Heart right ventricle (tissue), 16 donors: ENCODE measurements at regions of chr6 and their contacts with region 1.

Region 1: GRCh38 chr6:79949233-79949632 is 1.9 kb upstream of the ELOVL4 start:
- DNase-seq: peak in 1 of 2 donors; percentile 9
- ATAC-seq: no peak
- H3K4me3 ChIP-seq: no peak overlapping the region
- H3K27ac ChIP-seq: no peak overlapping the region
- H3K4me1 ChIP-seq: peaks cover 0 to 22% (median 13%) of the 10 kb centered on the region in 9 donors
- H3K27me3 ChIP-seq: peaks cover 0 to 60% (median 38%) of the 10 kb centered on the region in 7 donors
- CTCF ChIP-seq: peak in 7 of 9 donors; percentile 23 to 62 (median 38)

Region 2: DNA sequence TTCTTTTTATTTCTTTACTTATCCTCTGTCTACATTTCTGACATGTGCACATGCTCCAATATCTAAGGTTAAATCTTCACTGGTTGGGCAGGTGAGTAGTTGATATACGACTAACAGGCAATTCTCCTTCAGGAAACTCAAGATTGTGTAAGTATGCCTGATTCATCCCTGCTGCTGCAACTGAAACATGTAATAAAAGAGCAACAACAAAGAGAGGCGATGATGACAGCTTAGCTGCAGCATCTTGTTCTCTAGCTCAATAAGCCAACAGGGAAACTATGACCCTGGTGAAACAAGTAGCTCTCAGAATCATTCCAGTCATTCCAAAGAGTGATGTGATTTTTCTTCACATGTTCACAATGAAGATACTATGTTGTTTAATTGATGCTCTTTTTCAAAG is 76.3 kb before region 1 on chr6:
- intact Hi-C with region 1: no loop called
- DNase-seq: no peak
- ATAC-seq: no peak
- H3K4me3 ChIP-seq: no peak overlapping the region
- H3K27ac ChIP-seq: no peak overlapping the region
- H3K4me1 ChIP-seq: peaks cover 0 to 15% (median 0%) of the 10 kb centered on the region in 9 donors
- H3K27me3 ChIP-seq: no peaks in the 10 kb centered on the region
- CTCF ChIP-seq: no peak

Region 3: DNA sequence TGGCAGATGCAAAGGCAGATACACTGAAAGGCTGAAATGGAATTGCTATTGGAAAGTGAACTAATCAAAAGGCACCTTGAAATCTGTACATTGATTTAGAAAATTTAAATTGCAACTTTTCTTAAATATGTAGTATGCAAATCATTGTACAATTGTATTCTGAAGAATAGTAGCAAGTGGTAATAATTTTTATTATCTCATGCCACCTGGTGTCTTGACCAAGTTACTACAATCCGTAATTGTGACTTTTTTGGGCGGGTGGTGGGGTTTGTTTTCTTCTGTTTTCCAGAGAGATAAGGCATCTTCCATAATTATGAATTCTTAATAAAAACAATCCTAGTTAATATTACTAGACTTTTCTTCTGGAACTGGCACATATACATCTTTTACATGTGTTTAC is 144.8 kb after region 1 on chr6:
- intact Hi-C with region 1: loop called in 6 of 10 experiments (anchors 2 to 10 kb)
- DNase-seq: no peak
- ATAC-seq: no peak
- H3K4me3 ChIP-seq: no peak overlapping the region
- H3K27ac ChIP-seq: no peak overlapping the region
- H3K4me1 ChIP-seq: no peaks in the 10 kb centered on the region
- H3K27me3 ChIP-seq: peaks cover 0 to 2% (median 0%) of the 10 kb centered on the region in 7 donors
- CTCF ChIP-seq: peak in 8 of 9 donors; percentile 15 to 65 (median 58)

Region 4: GRCh38 chr6:80449726-80450125 is 500.5 kb after region 1 on chr6:
- intact Hi-C with region 1: no loop called
- DNase-seq: no peak
- ATAC-seq: no peak
- H3K4me3 ChIP-seq: no peak overlapping the region
- H3K27ac ChIP-seq: no peak overlapping the region
- H3K4me1 ChIP-seq: peaks cover 0 to 10% (median 0%) of the 10 kb centered on the region in 9 donors
- H3K27me3 ChIP-seq: no peaks in the 10 kb centered on the region
- CTCF ChIP-seq: no peak